ENCODE measurements at regions of chr19 and their contacts with region 1.

Region 1: DNA sequence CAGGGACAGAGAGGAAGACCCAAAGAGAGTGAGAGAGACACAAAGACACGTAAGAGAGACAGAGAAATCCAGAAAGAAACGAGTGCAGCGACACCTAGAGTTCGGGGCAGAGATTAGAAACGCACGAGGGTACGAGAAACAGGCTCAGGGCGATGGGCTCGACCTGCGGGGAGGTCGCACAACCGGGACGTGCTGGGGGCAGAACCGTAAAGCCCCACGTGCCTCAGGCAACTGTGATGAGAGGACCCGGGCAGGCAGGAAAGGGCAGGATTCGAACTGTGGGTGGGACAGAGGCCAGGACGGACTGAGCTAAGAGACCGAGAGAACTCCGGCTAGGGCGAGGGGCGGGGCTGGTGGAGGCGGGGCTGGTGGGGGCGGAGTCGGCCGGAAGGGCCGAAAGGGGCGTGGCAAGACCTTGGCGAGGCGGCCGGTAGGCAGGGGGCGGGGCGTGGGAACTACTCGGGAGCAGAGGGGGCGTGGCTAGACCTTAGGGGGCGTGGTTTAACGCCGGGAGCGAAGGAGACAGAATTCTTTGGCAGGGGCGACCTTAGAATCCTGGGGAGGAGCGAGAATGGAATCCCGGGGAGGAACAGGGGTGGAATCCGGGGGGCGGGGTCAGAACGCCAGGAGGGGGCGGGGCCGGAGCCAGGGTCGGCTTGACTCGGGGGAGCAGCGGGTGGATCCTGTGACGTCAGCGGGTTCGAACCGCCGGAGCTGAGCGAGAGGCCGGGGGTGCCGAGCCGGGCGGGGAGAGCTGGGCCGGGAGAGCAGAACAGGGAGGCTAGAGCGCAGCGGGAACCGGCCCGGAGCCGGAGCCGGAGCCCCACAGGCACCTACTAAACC is at the start of gene NECTIN2:
- DNase-seq: peak; percentile 100
- H3K27ac ChIP-seq: peak within 1 kb of the TSS; percentile 82
- CTCF ChIP-seq: no peak; the same call in none of the 2 replicates

Region 2: DNA sequence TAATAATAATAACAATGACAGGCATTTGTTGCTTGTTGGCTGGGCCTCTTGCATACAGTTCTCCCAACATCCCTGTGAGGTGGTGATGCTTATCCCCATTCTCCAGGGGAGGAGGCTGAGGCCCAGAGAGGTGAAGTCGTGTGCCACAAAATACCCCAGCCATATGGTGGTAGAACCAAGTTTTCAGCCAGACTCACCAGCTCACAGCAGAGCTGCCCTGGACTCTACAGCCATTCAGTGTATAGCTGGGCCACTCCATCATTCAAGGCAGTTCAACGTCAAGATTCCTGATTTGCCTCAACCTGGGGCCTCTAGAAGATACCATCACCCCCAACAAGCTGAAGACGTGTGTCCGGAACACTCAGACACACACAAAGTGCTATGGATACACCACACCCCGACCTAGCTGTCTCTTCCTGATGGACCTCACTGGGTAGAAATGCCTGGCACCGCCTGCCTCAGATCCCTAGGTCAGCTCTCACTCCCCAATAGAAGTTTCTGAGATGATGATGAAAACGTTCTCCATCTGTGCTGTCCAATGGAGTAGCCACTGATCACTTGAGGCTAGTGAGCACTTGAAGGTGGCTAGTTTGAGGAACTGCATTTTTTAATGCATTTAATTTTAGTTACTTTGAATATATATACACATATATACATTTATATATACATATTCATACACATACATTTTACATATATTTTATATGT is 178.8 kb before region 1 on chr19:
- CTCF ChIA-PET with region 1: no interaction called
- POLR2A ChIA-PET with region 1: no interaction called
- DNase-seq: no peak
- H3K27ac ChIP-seq: no peak overlapping the region
- CTCF ChIP-seq: no peak

Region 3: DNA sequence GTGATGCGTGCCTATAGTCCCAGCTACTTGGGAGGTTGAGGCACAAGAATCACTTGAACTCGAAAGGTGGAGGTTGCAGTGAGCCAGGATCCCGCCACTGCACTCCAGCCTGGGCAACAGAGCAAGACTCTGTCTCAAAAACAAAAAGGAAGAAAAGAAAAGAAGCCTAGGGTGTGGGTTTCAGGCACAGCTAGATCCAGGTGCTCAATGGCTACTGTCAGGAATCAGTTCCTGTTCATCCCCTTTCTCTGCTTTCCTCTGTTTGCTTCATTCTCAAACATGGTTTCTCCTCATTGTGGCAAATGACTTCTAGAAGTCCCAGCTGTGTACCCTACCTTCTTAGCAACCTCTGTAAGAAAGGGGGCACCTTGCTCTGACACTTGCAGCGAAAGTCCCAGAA is 62.3 kb before region 1 on chr19:
- CTCF ChIA-PET with region 1: interaction called, 11 read pairs
- POLR2A ChIA-PET with region 1: no interaction called
- DNase-seq: no peak
- H3K27ac ChIP-seq: no peak overlapping the region
- CTCF ChIP-seq: no peak

Measured in RWPE1 (cell line).